ENCODE measurements at regions of chr1 and their contacts with region 1.

Region 1: GRCh38 chr1:12275369-12275768 is 45.5 kb downstream of the VPS13D start:
- DNase-seq: peak; percentile 11 to 36
- ATAC-seq: no peak
- H3K4me3 ChIP-seq: no peak overlapping the region
- H3K27ac ChIP-seq: no peak overlapping the region
- H3K4me1 ChIP-seq: peaks cover 0 to 16% (median 0%) of the 10 kb centered on the region in 9 donors
- H3K27me3 ChIP-seq: no peaks in the 10 kb centered on the region
- CTCF ChIP-seq: peak; percentile 25 to 75 (median 61)

Region 2: DNA sequence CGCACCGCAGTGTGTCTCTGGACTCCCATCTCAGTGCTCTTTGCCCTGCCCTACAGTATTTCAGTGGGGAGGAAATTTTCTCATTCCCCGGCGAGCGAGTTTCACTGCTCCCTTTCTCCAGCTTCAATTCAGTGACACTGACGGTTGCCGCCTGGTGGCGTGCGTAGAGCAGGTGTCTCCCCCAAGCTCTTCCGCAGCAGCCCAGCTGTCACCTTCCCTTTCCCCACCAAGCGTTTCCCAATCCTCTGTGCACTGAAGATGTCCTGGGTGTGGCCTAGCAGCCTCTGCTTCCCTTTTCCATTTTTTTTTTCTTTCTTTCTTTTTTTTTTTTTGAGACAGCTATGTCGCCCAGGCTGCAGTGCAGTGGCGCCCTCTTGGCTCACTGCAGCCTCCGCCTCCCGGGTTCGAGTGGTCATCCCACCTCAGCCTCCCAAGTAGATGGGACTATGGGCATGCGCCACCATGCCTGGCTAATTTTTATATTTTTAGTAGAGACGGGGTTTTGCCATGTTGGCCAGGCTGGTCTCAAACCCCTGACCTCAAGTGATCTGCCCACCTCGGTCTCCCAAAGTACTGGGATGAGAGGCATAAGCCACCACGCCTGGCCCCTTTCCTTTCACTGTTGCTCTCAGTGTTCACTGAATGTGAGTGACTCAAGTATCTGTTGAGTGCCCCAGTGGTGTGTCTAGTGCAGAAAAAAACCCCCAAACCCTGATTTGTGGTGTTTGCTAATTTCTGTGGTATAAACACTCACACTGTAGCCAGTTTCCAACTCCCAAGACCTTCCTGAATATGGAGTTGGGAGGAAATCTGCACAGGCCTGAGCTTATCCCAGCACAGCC is 78.5 kb before region 1 on chr1:
- intact Hi-C with region 1: no loop called
- DNase-seq: peak in 1 of 2 donors; percentile 39
- ATAC-seq: peak in 7 of 8 donors; percentile 45 to 65 (median 63)
- H3K4me3 ChIP-seq: no peak overlapping the region
- H3K27ac ChIP-seq: peak overlapping the region in 2 of 10 donors; percentile 6 to 76
- H3K4me1 ChIP-seq: peaks cover 0 to 41% (median 0%) of the 10 kb centered on the region in 9 donors
- H3K27me3 ChIP-seq: no peaks in the 10 kb centered on the region
- CTCF ChIP-seq: peak in 3 of 9 donors; percentile 9 to 44 (median 14)

Region 3: DNA sequence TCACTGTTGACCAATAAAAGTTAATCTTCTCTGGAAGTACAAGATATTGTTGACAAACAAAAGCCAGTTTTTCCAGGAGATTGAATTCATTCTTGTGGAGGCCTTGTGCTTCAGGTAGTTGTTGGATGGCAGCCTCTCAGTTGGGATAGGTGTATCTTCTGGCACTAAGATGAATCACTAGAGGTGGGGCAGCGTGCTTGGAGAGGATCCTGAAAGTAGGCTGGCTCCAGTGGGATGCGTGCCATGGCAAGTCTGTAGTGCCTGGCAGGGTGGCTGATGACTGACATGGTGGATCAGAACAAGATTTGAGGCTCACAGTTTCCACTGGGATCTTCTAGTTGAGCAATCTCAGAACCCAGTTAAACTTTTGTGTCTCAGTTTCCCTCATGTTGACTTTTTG is 43.1 kb before region 1 on chr1:
- intact Hi-C with region 1: loop called in 1 of 10 experiments (anchors 2 kb)
- DNase-seq: peak; percentile 30 to 46
- ATAC-seq: peak in 3 of 8 donors; percentile 19 to 42 (median 20)
- H3K4me3 ChIP-seq: no peak overlapping the region
- H3K27ac ChIP-seq: peak overlapping the region in 2 of 10 donors; percentile 42 to 97
- H3K4me1 ChIP-seq: peaks cover 2 to 29% (median 16%) of the 10 kb centered on the region in 9 donors
- H3K27me3 ChIP-seq: no peaks in the 10 kb centered on the region
- CTCF ChIP-seq: no peak

Measured in heart right ventricle (tissue), 16 donors.